ENCODE measurements at regions of chr1 and their contacts with region 1.

Region 1: GRCh38 chr1:31394628-31395193 is 18.3 kb upstream of the SERINC2 start:
- DNase-seq: peak; percentile 90
- ATAC-seq: peak; percentile 92

Region 2: GRCh38 chr1:31289021-31289420 is 105.7 kb before region 1 on chr1:
- intact Hi-C with region 1: no loop called
- DNase-seq: no peak
- ATAC-seq: no peak

Region 3: GRCh38 chr1:31372961-31373896 is 21.5 kb before region 1 on chr1 and contains the start of gene FABP3:
- intact Hi-C with region 1: loop called (anchors 2 kb)
- DNase-seq: peak; percentile 90
- ATAC-seq: peak; percentile 78
- total RNA-seq, gene FABP3: 5,086 TPM

Region 4: DNA sequence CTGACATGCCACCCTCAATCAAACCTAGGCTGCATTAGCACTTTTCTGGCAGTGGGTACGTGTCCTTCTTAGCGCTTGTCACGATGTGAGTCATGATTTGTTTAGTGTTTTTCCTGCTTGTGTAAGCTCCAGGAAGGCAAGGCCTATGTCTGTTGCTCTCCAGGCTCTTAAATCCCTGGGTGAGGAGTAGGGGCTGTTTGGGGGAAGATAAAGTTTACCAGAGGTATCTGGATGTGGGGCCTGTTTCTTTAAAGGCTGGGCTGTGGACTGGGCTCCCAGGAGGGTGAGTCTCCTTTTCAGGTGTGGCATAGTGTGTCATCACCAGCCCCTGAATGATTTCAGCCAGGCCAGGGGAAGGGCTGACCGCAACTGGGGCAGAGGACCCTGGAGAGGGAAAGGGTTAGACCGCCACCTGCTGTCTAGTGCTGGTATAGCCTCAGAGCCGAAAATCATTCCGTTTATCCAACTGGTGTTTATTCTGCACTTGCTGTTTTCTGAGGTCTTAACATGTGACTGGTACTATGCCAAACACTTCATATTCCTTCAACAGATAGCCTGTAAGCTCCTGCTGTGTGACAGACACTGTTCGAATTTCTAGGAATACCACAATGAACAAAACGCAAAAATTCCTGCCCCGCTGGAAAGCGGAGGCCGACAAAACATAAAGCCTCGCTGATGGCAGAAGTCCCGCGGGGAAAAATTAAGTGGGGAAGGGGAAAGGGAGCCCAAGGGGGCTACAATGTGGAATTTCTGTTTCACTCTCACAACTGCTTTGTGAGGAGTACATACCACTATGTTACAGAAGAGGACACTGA is 28.0 kb after region 1 on chr1:
- intact Hi-C with region 1: loop called (anchors 1 kb)
- DNase-seq: no peak
- ATAC-seq: peak; percentile 63

Region 5: DNA sequence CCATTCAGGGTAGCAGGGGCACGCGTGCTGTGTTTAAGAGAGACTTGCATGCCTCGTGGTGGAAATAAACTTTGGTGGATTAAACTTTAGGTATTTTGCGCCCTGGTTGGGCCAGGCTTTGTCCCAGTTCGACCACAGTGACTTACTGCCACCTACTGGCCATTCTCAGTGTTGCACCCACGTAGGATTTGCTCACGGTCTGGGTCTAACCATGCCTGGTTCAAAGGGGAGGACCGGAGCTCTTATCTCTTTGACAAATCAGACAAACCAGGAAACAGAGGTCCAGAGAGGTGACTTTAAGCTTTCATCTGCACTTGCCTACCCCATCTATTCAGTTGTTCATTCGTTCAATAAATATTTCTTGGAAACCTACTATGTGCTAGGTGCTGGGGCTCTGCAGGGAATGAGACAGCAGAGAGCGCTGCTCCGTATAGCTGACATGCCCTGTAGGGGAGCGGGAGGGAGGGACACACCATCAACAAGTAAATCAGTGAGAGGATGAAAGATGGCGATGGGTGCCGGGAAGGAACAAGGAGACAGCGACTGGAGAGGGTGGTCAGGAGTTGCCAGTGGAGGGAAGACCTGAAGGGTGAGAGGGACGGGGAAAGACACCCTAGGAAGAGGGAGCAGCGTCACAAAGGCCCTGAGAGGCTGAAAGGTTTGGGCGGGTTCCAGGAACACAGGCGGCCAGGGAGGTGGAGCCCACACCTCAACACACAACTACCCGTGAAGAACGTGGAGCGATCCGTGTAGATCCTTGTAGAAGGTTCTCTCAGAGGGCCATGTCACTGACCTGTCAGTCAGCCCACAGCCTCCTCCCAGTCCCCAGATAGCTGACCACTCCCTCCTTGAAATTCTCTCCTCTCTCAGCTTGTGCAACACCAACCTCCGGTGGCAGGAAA is 154.4 kb after region 1 on chr1:
- intact Hi-C with region 1: loop called (anchors 10 kb)
- DNase-seq: peak; percentile 82
- ATAC-seq: peak; percentile 94